ENCODE measurements at regions of chr4 and their contacts with region 1.

Region 1: DNA sequence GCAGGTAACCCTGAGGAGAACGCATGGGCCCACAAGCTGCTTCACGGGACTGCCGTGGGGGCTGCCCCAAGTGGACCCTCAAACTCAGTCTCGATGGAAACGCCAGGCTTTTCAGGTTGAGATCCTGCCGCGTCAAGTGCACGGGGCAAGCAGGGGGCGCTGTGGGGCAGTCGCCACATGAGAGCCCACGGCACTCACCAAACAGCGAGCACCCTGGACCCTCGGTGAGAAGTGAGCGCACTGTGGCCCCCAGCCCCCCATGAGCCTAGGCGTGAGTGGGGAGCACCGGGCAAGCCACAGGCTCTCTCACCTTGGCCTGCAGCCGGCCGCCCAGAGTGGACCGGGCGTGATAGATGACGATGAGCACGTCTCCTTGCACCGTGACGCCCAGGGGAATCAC is 50.9 kb upstream of the CPLX1 start:
- DNase-seq: no peak
- H3K4me3 Mint-ChIP-seq: no peak overlapping the region
- H3K27ac Mint-ChIP-seq: peak overlapping the region; percentile 81
- H3K4me1 Mint-ChIP-seq: peaks cover 41% of the 10 kb centered on the region
- H3K27me3 Mint-ChIP-seq: no peaks in the 10 kb centered on the region

Region 2: GRCh38 chr4:271492-272103 is 605.2 kb before region 1 on chr4:
- intact Hi-C with region 1: no loop called
- DNase-seq: no peak
- H3K4me3 Mint-ChIP-seq: no peak overlapping the region
- H3K27ac Mint-ChIP-seq: no peak overlapping the region
- H3K4me1 Mint-ChIP-seq: no peaks in the 10 kb centered on the region
- H3K27me3 Mint-ChIP-seq: no peaks in the 10 kb centered on the region

Region 3: DNA sequence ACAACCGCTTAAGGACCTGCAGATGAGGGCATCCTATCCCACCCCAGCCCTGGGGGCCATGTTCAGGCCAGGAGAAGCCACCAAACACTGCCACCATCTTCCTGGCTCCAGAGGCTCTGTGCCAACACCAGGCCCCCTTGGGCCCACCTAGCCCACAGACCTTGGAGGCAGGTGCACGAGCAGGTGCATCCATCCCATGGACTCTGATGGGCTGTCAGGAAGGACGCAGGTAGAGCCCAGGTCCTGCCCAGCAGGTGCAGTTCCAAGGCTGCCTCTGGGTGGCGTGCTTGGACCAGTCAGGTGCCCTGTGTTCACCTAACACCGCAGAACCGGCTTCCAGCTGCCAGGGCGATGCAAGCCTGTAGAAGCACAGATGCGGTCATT is 274.2 kb before region 1 on chr4:
- intact Hi-C with region 1: loop called (anchors 5 kb)
- DNase-seq: peak; percentile 23
- H3K4me3 Mint-ChIP-seq: no peak overlapping the region
- H3K27ac Mint-ChIP-seq: no peak overlapping the region
- H3K4me1 Mint-ChIP-seq: peaks cover 7% of the 10 kb centered on the region
- H3K27me3 Mint-ChIP-seq: peaks cover 3% of the 10 kb centered on the region

Region 4: GRCh38 chr4:825238-825835 is 51.4 kb before region 1 on chr4:
- intact Hi-C with region 1: loop called (anchors 5 kb)
- DNase-seq: no peak
- H3K4me3 Mint-ChIP-seq: no peak overlapping the region
- H3K27ac Mint-ChIP-seq: no peak overlapping the region
- H3K4me1 Mint-ChIP-seq: no peaks in the 10 kb centered on the region
- H3K27me3 Mint-ChIP-seq: peaks cover 33% of the 10 kb centered on the region

Region 5: GRCh38 chr4:931960-932712 is 55.4 kb after region 1 on chr4 and contains the starts of genes GAK and TMEM175:
- intact Hi-C with region 1: loop called (anchors 1 kb)
- DNase-seq: peak; percentile 99
- H3K4me3 Mint-ChIP-seq: peak within 1 kb of the TSS; percentile 97
- H3K27ac Mint-ChIP-seq: peak within 1 kb of the TSS; percentile 90
- H3K4me1 Mint-ChIP-seq: peaks cover 34% of the 10 kb centered on the region
- H3K27me3 Mint-ChIP-seq: no peaks in the 10 kb centered on the region
- total RNA-seq, gene GAK: 146 and 149 TPM in 2 replicates
- total RNA-seq, gene TMEM175: 15.4 and 16.2 TPM in 2 replicates

Region 6: GRCh38 chr4:961351-962230 is 84.8 kb after region 1 on chr4:
- intact Hi-C with region 1: no loop called
- DNase-seq: no peak
- H3K4me3 Mint-ChIP-seq: no peak overlapping the region
- H3K27ac Mint-ChIP-seq: no peak overlapping the region
- H3K4me1 Mint-ChIP-seq: no peaks in the 10 kb centered on the region
- H3K27me3 Mint-ChIP-seq: no peaks in the 10 kb centered on the region

Region 7: GRCh38 chr4:986879-987623 is 110.3 kb after region 1 on chr4 and contains the start of gene IDUA:
- intact Hi-C with region 1: loop called (anchors 1 kb)
- DNase-seq: peak; percentile 84
- H3K4me3 Mint-ChIP-seq: peak within 1 kb of the TSS; percentile 88
- H3K27ac Mint-ChIP-seq: peak within 1 kb of the TSS; percentile 81
- H3K4me1 Mint-ChIP-seq: peaks cover 17% of the 10 kb centered on the region
- H3K27me3 Mint-ChIP-seq: no peaks in the 10 kb centered on the region
- total RNA-seq, gene IDUA: 33.8 and 34.3 TPM in 2 replicates

Measured in activated T-helper 1 cell treated with anti-CD3 and anti-CD28 coated beads, Interleukin-12 subunit alpha, Interleukin-12 subunit beta, Interleukin-2, Interleukin-4 antibody, amounts not matched to agents 30 ng/mL and 10 ng/mL and 1 ng/mL, durations not matched to agents 14 hours and 24 hours and 36 hours (primary cell).